ENCODE measurements at regions of chr1 and their contacts with region 1.

Region 1: DNA sequence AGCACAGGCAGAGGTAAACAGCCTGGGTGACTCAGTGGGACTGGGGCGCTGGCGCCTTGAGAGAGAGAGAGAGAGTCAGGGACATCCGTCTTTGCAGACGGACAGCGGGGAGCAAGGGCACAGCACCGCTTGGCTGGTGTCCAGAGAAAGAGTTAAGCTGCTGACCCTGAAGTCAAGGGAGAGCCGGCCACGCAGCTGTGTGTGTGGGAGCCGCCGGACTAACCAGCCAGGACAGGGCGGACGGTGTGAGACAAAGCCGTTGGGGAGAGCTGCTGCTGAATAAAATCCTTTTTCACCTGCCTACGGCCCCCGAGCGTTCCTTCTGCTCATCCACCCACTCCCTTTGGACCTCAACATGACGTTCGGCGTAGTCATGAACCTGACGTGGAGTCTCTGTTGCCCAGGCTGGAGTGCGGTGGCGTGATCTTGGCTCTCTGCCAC is 14.5 kb downstream of the CFAP74 start:
- DNase-seq: peak; percentile 38
- H3K4me3 ChIP-seq: no peak overlapping the region
- H3K27ac ChIP-seq: no peak overlapping the region
- H3K4me1 ChIP-seq: peaks cover 8% of the 10 kb centered on the region
- H3K27me3 ChIP-seq: no peaks in the 10 kb centered on the region
- CTCF ChIP-seq: no peak

Region 2: DNA sequence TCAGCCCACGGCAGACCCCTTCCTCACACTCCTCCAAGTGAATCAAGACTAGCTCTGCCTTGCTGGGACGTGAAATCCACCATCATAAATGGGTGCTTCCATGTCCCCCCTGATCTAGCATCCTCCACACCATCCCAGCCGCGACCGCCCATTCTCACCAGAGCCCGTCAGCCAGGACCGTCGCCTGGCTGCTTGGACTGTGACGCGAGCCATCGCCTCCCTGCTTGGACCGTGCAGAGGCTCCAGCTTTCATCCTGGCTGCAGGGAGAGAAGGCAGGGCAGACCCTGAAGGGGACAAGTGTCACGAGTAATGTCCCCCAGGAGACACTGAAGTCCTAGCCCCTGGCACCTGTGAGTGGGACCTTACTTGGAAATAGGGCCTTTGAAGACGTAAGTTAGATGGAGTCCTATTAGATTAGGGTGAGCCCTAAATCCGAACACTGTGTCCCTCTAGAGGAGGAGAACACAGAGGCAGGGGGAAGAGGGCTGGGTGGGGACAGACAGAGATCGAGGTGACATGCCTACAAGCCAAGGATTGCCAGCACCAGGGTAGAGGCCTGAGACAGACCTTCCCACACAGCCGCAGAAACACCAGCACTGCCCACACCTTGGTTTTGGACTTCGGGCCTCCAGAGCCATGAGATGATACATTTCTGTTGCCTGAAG is 48.3 kb after region 1 on chr1:
- CTCF ChIA-PET with region 1: no interaction called
- dilution Hi-C with region 1: loop called (anchors 5 kb)
- in situ Hi-C with region 1: no loop called
- intact Hi-C with region 1: no loop called
- DNase-seq: no peak
- H3K4me3 ChIP-seq: no peak overlapping the region
- H3K27ac ChIP-seq: no peak overlapping the region
- H3K4me1 ChIP-seq: no peaks in the 10 kb centered on the region
- H3K27me3 ChIP-seq: peaks cover 2% of the 10 kb centered on the region
- CTCF ChIP-seq: no peak

Region 3: GRCh38 chr1:2275796-2276536 is 286.8 kb after region 1 on chr1:
- CTCF ChIA-PET with region 1: no interaction called
- dilution Hi-C with region 1: no loop called
- in situ Hi-C with region 1: no loop called
- intact Hi-C with region 1: no loop called
- DNase-seq: no peak
- H3K4me3 ChIP-seq: no peak overlapping the region
- H3K27ac ChIP-seq: no peak overlapping the region
- H3K4me1 ChIP-seq: peaks cover 32% of the 10 kb centered on the region
- H3K27me3 ChIP-seq: no peaks in the 10 kb centered on the region
- CTCF ChIP-seq: no peak